ENCODE measurements at regions of chr7 and their contacts with region 1.

Region 1: DNA sequence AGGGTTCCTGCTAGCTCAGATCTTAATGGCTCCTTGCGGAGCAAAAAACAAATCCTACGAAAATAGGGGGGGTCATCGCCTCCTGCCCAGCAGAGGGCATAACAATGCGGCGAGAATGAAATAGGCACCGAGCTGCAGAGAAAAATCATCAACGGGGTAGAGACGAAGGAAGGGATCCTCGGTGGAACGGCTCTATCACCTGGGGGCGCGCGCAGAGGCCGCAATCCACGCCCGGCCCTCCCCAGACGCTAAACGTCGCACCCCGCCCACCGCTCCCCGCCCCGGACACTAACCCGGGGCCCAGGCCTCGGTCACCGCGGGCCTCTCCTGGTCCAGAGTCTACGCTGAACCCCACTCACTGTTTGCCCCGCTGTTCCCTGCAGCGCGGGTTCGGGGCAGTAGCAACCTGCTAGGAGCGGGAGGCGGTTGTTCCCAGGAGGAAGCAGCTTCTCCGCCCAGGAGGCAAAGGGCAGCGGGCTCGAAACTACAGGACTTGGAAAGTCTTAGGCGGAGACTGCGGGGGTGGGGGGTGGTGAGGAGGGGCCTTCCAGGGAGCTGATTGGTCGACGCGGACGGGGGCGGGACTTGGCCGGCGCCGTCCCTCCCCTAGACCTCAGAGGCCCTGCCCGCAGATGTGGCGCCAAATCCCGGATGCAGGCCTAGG is at the start of gene TCAF1:
- DNase-seq: peak; percentile 93
- ATAC-seq: peak; percentile 96
- H3K4me3 Mint-ChIP-seq: peak within 1 kb of the TSS; percentile 90
- H3K27ac Mint-ChIP-seq: peak within 1 kb of the TSS; percentile 90
- H3K4me1 Mint-ChIP-seq: peaks cover 24% of the 10 kb centered on the region
- H3K27me3 Mint-ChIP-seq: no peaks in the 10 kb centered on the region
- total RNA-seq, gene TCAF1: 17.4 to 17.8 TPM

Region 2: GRCh38 chr7:143886826-143887475 is 14.8 kb before region 1 on chr7:
- CTCF ChIA-PET with region 1: interaction called, 29 read pairs
- DNase-seq: no peak
- ATAC-seq: no peak
- H3K4me3 Mint-ChIP-seq: no peak overlapping the region
- H3K27ac Mint-ChIP-seq: no peak overlapping the region
- H3K4me1 Mint-ChIP-seq: peaks cover 26% of the 10 kb centered on the region
- H3K27me3 Mint-ChIP-seq: peaks cover 18% of the 10 kb centered on the region

Region 3: GRCh38 chr7:144127703-144128334 is 226.0 kb after region 1 on chr7:
- CTCF ChIA-PET with region 1: interaction called, 10 read pairs
- DNase-seq: peak; percentile 91
- ATAC-seq: peak; percentile 99
- H3K4me3 Mint-ChIP-seq: no peak overlapping the region
- H3K27ac Mint-ChIP-seq: no peak overlapping the region
- H3K4me1 Mint-ChIP-seq: peaks cover 2% of the 10 kb centered on the region
- H3K27me3 Mint-ChIP-seq: peaks cover 3% of the 10 kb centered on the region

Region 4: DNA sequence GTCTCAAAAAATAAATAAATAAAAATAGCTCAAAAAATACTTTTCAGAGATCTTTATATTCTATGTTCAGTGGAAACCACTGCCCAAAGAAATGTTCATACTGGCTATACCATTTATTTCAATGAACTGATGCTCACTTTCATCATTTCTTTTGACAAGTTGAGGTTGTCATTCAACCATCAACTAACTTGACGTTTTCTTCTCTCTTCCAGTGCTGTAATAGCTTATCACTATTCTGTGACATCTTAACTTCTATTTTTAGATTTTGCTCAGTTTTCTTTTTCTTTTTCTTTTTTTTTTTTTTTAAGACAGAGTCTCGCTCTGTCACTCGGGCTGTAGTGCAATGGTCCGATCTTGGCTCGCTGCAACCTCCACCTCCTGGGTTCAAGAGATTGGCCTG is 272.8 kb after region 1 on chr7:
- CTCF ChIA-PET with region 1: no interaction called
- DNase-seq: no peak
- ATAC-seq: no peak
- H3K4me3 Mint-ChIP-seq: no peak overlapping the region
- H3K27ac Mint-ChIP-seq: no peak overlapping the region
- H3K4me1 Mint-ChIP-seq: no peaks in the 10 kb centered on the region
- H3K27me3 Mint-ChIP-seq: peaks cover 7% of the 10 kb centered on the region

Measured in activated CD8-positive, alpha-beta memory T cell treated with anti-CD3 and anti-CD28 coated beads, Interleukin-2, amount 10 ng/mL, durations not matched to agents 7 days and 5 days (primary cell).